Panc1 (cell line): ENCODE measurements at regions of chr21 and their contacts with region 1.

Region 1: DNA sequence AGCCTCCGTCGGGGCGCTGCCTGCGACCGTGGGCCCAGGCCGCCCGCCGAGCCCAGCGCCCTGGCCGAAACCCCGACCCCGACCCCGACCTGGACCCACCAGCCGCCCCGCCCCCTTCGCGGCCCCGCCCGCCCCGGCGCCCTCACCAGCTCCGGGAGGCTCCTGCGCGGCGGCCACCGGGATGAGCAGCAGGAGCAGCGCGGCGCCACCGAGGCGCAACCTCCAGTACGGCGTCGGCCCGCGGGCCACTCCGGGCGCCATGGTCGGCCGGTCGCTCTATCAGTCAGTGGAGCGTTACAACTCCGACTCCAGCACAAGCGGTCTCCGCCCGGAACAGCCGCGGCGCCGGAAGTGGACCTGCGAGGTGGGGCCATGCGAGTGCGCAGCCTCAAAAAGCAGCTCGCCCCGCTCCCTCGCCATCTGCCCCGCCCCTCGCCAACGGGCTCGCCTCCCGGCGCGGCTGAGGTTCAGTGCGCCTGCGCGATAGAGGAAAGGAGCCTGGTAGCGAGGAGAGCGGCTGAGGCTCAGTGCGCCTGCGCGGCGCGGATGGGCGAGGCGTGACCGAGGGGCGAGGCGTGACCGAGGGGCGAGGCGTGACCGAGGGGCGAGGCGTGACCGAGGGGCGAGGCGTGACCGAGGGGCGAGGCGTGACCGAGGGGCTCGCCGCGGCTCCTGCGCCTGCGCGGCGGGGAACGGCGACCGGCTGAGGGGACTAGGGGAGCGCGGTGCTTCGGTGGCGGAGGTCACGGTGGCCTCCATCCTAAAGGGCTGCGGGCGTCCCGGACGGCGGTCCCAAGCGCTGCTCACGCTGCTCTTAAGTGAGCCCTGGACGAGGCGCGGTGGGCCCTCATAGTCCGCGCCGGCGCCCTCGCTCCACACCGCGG is at the start of gene PTTG1IP:
- DNase-seq: no peak
- ATAC-seq: peak; percentile 77
- H3K4me3 ChIP-seq: peak within 1 kb of the TSS; percentile 81 to 85
- H3K27ac ChIP-seq: peak within 1 kb of the TSS; percentile 95
- H3K4me1 ChIP-seq: peaks cover 27% of the 10 kb centered on the region
- H3K27me3 ChIP-seq: no peaks in the 10 kb centered on the region
- CTCF ChIP-seq: no peak
- total RNA-seq, gene PTTG1IP: 226 TPM

Region 2: GRCh38 chr21:44801468-44802395 is 71.9 kb before region 1 on chr21 and contains the start of gene UBE2G2:
- CTCF ChIA-PET with region 1: no interaction called
- POLR2A ChIA-PET with region 1: interaction called, 6 read pairs
- in situ Hi-C with region 1: no loop called
- intact Hi-C with region 1: loop called (anchors 2 kb)
- DNase-seq: no peak
- ATAC-seq: peak; percentile 95
- H3K4me3 ChIP-seq: peak within 1 kb of the TSS; percentile 91 to 93
- H3K27ac ChIP-seq: peak within 1 kb of the TSS; percentile 89
- H3K4me1 ChIP-seq: peaks cover 16% of the 10 kb centered on the region
- H3K27me3 ChIP-seq: no peaks in the 10 kb centered on the region
- CTCF ChIP-seq: no peak
- total RNA-seq, gene UBE2G2: 77.4 TPM